Right lobe of liver (tissue), 6 donors: ENCODE measurements at regions of chr6 and their contacts with region 1.

Region 1: GRCh38 chr6:79954849-79955248 is 7.5 kb upstream of the ELOVL4 start:
- DNase-seq: no peak
- ATAC-seq: no peak
- H3K4me3 ChIP-seq: no peak overlapping the region
- H3K27ac ChIP-seq: no peak overlapping the region
- H3K4me1 ChIP-seq: no peaks in the 10 kb centered on the region
- H3K27me3 ChIP-seq: no peaks in the 10 kb centered on the region
- CTCF ChIP-seq: no peak
- POLR2A ChIP-seq: no peak

Region 2: GRCh38 chr6:80029470-80029869 is 74.6 kb after region 1 on chr6:
- intact Hi-C with region 1: no loop called
- DNase-seq: no peak
- ATAC-seq: peak; percentile 39 to 77 (median 56)
- H3K4me3 ChIP-seq: no peak overlapping the region
- H3K27ac ChIP-seq: no peak overlapping the region
- H3K4me1 ChIP-seq: no peaks in the 10 kb centered on the region
- H3K27me3 ChIP-seq: no peaks in the 10 kb centered on the region
- CTCF ChIP-seq: no peak
- POLR2A ChIP-seq: no peak

Region 3: DNA sequence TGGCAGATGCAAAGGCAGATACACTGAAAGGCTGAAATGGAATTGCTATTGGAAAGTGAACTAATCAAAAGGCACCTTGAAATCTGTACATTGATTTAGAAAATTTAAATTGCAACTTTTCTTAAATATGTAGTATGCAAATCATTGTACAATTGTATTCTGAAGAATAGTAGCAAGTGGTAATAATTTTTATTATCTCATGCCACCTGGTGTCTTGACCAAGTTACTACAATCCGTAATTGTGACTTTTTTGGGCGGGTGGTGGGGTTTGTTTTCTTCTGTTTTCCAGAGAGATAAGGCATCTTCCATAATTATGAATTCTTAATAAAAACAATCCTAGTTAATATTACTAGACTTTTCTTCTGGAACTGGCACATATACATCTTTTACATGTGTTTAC is 139.2 kb after region 1 on chr6:
- intact Hi-C with region 1: loop called in 1 of 2 experiments (anchors 10 kb)
- DNase-seq: no peak
- ATAC-seq: peak; percentile 52 to 69 (median 62)
- H3K4me3 ChIP-seq: no peak overlapping the region
- H3K27ac ChIP-seq: no peak overlapping the region
- H3K4me1 ChIP-seq: no peaks in the 10 kb centered on the region
- H3K27me3 ChIP-seq: no peaks in the 10 kb centered on the region
- CTCF ChIP-seq: peak; percentile 49 to 63 (median 60)
- POLR2A ChIP-seq: no peak